ENCODE measurements at regions of chr2 and their contacts with region 1.

Region 1: DNA sequence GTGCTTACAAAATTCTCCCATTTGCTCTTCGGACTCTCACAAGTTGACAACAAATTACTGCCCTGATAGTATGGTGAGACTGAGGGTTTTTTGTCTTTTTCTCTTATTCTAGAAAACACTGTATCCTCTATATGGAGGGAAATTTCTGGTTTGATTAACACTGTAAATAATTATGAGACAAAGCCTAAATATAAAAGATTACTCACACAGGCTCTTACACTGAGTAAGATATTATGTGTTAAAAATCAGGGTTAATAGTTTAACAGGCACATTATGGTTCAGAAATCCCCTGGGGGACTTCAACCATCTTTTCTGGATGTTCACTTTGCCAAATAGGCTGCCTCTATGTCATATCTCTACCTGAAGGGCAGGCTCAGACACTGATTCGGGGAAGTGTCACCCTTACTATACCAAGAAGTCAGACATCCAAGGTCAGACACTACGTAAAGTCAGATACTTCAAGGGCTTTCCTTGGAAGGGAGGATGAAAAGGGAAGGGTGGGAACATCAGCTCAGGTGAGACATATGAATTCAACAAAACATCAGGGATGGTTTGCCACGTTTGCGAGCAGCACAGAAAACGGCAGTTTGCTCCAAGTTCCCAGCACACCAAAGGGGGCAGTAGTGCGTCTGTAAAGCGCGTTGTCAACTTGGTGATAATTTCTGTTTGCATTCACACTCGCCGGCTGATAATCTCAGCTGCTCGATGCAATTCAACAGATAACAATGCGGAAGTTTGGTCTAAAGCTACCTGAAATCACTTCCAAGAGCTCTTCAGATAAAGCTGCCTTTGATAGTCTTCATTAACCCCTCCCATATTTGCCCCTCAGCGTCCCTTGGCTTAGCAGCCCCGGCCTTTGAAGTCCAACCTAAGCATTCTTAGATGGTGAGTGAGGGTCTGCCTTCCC is 972 bp upstream of the RASGRP3 start:
- DNase-seq: peak; percentile 61 to 86 (median 80)
- H3K4me3 ChIP-seq: peak overlapping the region; percentile 74
- H3K4me3 Mint-ChIP-seq: peak overlapping the region; percentile 90 to 98 (median 94)
- H3K27ac ChIP-seq: peak overlapping the region; percentile 91
- H3K27ac Mint-ChIP-seq: peak overlapping the region; percentile 94 to 99 (median 97)
- H3K4me1 ChIP-seq: peaks cover 20% of the 10 kb centered on the region
- H3K4me1 Mint-ChIP-seq: peaks cover 22 to 38% (median 33%) of the 10 kb centered on the region in 3 donors
- H3K27me3 ChIP-seq: no peaks in the 10 kb centered on the region
- H3K27me3 Mint-ChIP-seq: no peaks in the 10 kb centered on the region

Region 2: DNA sequence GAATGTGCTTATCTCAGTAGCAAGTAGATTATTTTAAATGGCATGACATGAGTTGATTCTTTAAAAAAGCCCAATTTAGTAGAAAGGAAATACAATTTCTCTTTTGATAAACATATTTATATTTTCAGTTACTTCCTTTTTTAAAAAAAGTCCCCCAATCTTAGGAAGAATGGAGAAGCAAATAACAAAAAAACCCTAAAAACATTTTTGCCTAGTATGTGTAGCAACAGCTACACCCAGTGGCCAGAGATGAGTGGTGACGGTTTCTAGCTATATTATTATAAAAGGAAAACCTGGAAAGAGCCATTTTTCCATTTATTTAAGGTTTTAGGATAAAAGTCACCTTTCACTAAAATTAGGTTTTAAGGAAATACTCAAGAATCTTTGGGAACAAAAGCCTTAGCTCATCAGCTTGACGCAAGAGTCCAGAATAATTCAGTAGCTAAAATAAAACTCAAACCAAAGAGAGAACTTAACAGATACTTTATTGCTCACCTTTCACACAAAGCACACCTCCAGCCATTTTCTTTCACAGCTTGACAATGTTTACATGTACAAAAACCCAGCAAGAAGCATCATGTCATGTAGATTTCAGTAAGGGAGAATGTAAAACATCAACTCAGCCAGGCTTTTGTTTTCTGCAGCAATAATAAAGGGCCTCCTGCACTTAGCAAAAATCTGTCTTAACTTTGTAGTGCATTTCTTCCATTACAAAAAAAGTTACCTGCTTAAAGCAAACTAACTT is 107.9 kb after region 1 on chr2:
- CTCF ChIA-PET with region 1: interaction called, 33 read pairs
- POLR2A ChIA-PET with region 1: interaction called, 6 read pairs
- DNase-seq: peak in 3 of 5 donors; percentile 31 to 51 (median 32)
- H3K4me3 ChIP-seq: no peak overlapping the region
- H3K4me3 Mint-ChIP-seq: no peak overlapping the region
- H3K27ac ChIP-seq: no peak overlapping the region
- H3K27ac Mint-ChIP-seq: no peak overlapping the region
- H3K4me1 ChIP-seq: peaks cover 11% of the 10 kb centered on the region
- H3K4me1 Mint-ChIP-seq: peaks cover 2 to 8% (median 5%) of the 10 kb centered on the region in 3 donors
- H3K27me3 ChIP-seq: no peaks in the 10 kb centered on the region
- H3K27me3 Mint-ChIP-seq: no peaks in the 10 kb centered on the region

Region 3: DNA sequence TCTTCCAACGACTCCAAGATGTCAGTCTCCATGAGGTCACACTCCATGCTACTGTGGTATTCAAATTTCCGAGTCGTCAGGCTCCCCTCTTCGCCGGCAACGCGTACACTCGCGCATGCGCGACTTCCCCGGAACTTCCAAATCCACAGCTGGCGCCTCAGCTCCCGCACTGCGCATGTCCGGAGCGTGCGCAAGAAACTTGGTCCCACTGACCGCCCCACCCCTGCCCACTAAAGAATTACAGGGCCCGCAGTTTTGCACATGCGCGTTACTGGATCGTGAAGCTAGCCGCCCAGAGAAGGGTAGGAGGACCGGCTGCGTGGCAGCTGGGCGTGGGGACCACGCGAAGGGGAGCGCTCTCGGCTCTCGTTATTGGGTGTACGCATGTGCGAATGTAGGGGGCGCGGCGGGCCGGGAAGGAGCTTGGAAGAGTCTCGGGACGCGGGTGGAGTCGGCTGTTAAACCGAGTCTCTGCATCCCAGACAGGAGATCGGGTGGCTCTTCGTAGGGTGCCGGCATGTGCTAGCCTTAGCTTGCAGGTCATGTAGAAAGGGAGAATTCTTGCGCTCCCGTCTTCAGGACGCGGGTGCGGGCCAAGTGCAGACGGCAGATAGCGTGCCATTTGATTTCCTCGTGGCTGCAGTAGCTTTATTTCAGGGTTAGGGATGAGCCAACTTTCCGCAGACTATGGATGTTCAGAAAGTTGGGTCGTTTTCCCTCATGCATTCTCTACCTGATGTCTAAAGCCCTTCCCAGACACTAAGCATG is 123.9 kb after region 1 on chr2 and contains the start of gene FAM98A:
- CTCF ChIA-PET with region 1: interaction called, 23 read pairs
- POLR2A ChIA-PET with region 1: interaction called, 12 read pairs
- DNase-seq: peak; percentile 98 to 99 (median 99)
- H3K4me3 ChIP-seq: peak within 1 kb of the TSS; percentile 87
- H3K4me3 Mint-ChIP-seq: peak within 1 kb of the TSS; percentile 94 to 99 (median 96)
- H3K27ac ChIP-seq: peak within 1 kb of the TSS; percentile 83
- H3K27ac Mint-ChIP-seq: peak within 1 kb of the TSS; percentile 84 to 98 (median 96)
- H3K4me1 ChIP-seq: peaks cover 20% of the 10 kb centered on the region
- H3K4me1 Mint-ChIP-seq: peaks cover 39 to 44% (median 41%) of the 10 kb centered on the region in 3 donors
- H3K27me3 ChIP-seq: no peaks in the 10 kb centered on the region
- H3K27me3 Mint-ChIP-seq: peaks cover 0 to 6% of the 10 kb centered on the region in 2 donors
- total RNA-seq, gene FAM98A: 85.5 to 86.4 TPM

Region 4: GRCh38 chr2:33746208-33746800 is 270.8 kb after region 1 on chr2:
- CTCF ChIA-PET with region 1: no interaction called
- POLR2A ChIA-PET with region 1: no interaction called
- DNase-seq: no peak
- H3K4me3 ChIP-seq: no peak overlapping the region
- H3K4me3 Mint-ChIP-seq: no peak overlapping the region
- H3K27ac ChIP-seq: no peak overlapping the region
- H3K27ac Mint-ChIP-seq: no peak overlapping the region
- H3K4me1 ChIP-seq: no peaks in the 10 kb centered on the region
- H3K4me1 Mint-ChIP-seq: no peaks in the 10 kb centered on the region
- H3K27me3 ChIP-seq: no peaks in the 10 kb centered on the region
- H3K27me3 Mint-ChIP-seq: peaks cover 7 to 29% of the 10 kb centered on the region in 2 donors

Measured in CD8-positive, alpha-beta memory T cell (primary cell).